Left cardiac atrium (tissue), 4 donors: ENCODE measurements at regions of chr14 and their contacts with region 1.

Region 1: DNA sequence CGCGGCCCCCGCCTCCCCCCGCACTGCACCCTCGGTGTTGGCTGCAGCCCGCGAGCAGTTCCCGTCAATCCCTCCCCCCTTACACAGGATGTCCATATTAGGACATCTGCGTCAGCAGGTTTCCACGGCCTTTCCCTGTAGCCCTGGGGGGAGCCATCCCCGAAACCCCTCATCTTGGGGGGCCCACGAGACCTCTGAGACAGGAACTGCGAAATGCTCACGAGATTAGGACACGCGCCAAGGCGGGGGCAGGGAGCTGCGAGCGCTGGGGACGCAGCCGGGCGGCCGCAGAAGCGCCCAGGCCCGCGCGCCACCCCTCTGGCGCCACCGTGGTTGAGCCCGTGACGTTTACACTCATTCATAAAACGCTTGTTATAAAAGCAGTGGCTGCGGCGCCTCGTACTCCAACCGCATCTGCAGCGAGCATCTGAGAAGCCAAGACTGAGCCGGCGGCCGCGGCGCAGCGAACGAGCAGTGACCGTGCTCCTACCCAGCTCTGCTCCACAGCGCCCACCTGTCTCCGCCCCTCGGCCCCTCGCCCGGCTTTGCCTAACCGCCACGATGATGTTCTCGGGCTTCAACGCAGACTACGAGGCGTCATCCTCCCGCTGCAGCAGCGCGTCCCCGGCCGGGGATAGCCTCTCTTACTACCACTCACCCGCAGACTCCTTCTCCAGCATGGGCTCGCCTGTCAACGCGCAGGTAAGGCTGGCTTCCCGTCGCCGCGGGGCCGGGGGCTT is at the start of gene FOS:
- DNase-seq: peak; percentile 95
- ATAC-seq: peak; percentile 77 to 81
- total RNA-seq, gene FOS: 69.4 to 160 TPM

Region 2: DNA sequence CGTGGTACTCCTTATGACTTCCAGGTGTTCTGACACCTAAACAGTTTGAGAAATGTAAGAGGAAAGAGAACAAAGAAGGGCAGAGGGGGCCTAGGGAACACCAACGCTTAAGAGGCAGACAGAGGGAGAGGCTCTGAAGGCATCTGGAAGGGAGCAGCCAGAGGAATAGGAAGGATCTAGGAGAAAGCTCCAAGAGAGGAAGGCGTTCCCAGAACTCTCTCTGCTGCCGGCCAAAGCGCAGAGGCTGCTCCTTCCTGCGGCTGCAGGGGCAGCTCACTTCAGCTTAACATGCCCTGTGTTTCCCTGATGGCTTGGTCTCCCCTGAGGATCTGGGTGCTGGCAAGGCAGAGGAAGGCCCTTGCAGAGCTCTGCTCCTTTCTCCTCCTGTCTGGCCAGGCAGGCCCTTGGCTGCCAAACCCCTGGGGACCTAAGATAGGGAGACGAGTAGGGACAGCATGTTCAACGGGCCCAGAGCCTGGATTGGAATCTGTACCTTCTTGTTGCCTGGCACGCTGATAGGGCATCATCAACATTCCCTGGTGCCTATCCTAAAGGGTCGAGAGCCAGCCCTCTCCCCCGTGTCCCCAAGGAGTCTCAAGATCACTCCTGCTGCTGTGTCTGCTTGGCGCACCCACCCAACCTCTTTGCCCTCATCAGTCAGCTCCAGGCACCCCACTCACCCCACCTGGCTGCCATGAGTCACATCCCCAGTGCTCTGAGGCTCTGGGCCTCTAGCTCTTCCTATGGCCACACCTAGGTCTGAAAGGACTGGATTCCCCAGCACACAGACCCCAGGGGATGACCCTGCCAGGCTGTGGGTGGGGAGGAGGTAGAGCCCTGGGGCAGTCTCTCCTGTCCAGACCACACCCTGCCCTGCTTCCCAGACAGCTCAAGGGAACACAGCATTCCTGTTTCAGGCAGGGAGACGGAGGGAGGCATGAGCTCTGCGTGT is 712.1 kb before region 1 on chr14:
- intact Hi-C with region 1: no loop called
- DNase-seq: no peak
- ATAC-seq: peak; percentile 9 to 24

Region 3: GRCh38 chr14:75176142-75176820 is 102.3 kb before region 1 on chr14 and contains the start of gene TMED10:
- intact Hi-C with region 1: loop called in 1 of 2 experiments (anchors 5 kb)
- DNase-seq: peak; percentile 92
- ATAC-seq: peak; percentile 95 to 97
- total RNA-seq, gene TMED10: 271 to 327 TPM

Region 4: GRCh38 chr14:75258615-75259466 is 19.8 kb before region 1 on chr14:
- intact Hi-C with region 1: loop called in 1 of 2 experiments (anchors 1 kb)
- DNase-seq: peak; percentile 99
- ATAC-seq: peak; percentile 94 to 96